HCT116 (cell line): ENCODE measurements at regions of chr2 and their contacts with region 1.

Region 1: DNA sequence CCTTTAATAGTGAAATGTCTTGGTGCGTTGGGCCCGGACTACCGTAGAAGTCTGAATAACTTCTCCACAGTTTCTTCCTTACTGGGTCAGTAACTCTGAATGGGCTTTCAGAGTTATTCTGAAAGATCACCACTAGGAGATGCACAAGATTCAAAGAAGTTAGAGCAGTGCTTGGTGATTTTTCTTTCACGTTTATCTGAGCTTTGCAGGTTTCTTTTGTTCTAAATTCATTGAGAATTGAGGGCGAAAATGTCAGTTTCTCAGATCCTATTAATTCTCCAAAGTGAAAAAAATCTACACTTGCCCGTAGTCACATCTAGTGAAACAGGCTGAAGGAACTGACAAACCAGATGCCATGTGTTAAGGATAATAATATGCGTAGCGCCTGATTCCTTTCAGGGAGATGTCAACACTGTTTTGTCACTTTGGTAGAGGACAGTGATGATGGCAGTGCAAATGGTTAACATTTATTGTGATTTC is 70.1 kb downstream of the QPCT start:
- DNase-seq: peak; percentile 42
- ATAC-seq: peak; percentile 91
- H3K4me3 ChIP-seq: no peak overlapping the region
- H3K27ac ChIP-seq: no peak overlapping the region
- H3K4me1 ChIP-seq: no peaks in the 10 kb centered on the region
- H3K27me3 ChIP-seq: no peaks in the 10 kb centered on the region
- CTCF ChIP-seq: peak; percentile 73 to 93 (median 86)
- POLR2A ChIP-seq: no peak
- RAD21 ChIP-seq: peak; percentile 97

Region 2: GRCh38 chr2:37394263-37394662 is 20.2 kb before region 1 on chr2:
- CTCF ChIA-PET with region 1: interaction called, 23 read pairs
- POLR2A ChIA-PET with region 1: no interaction called
- RAD21 ChIA-PET with region 1: interaction called, 4 to 8 read pairs
- intact Hi-C with region 1: no loop called
- DNase-seq: no peak
- ATAC-seq: no peak
- H3K4me3 ChIP-seq: no peak overlapping the region
- H3K27ac ChIP-seq: no peak overlapping the region
- H3K4me1 ChIP-seq: peaks cover 3 to 18% of the 10 kb centered on the region in 2 experiments; a peak in 3 of 4 replicates
- H3K27me3 ChIP-seq: no peaks in the 10 kb centered on the region
- CTCF ChIP-seq: no peak
- POLR2A ChIP-seq: no peak
- RAD21 ChIP-seq: no peak

Region 3: GRCh38 chr2:37570773-37571586 is 156.5 kb after region 1 on chr2:
- CTCF ChIA-PET with region 1: no interaction called
- POLR2A ChIA-PET with region 1: no interaction called
- RAD21 ChIA-PET with region 1: no interaction called
- intact Hi-C with region 1: loop called (anchors 10 kb)
- DNase-seq: no peak
- ATAC-seq: no peak
- H3K4me3 ChIP-seq: no peak overlapping the region
- H3K27ac ChIP-seq: no peak overlapping the region
- H3K4me1 ChIP-seq: peaks cover 0 to 12% of the 10 kb centered on the region in 2 experiments; a peak in 1 of 4 replicates
- H3K27me3 ChIP-seq: no peaks in the 10 kb centered on the region
- CTCF ChIP-seq: no peak
- POLR2A ChIP-seq: no peak
- RAD21 ChIP-seq: no peak

Region 4: DNA sequence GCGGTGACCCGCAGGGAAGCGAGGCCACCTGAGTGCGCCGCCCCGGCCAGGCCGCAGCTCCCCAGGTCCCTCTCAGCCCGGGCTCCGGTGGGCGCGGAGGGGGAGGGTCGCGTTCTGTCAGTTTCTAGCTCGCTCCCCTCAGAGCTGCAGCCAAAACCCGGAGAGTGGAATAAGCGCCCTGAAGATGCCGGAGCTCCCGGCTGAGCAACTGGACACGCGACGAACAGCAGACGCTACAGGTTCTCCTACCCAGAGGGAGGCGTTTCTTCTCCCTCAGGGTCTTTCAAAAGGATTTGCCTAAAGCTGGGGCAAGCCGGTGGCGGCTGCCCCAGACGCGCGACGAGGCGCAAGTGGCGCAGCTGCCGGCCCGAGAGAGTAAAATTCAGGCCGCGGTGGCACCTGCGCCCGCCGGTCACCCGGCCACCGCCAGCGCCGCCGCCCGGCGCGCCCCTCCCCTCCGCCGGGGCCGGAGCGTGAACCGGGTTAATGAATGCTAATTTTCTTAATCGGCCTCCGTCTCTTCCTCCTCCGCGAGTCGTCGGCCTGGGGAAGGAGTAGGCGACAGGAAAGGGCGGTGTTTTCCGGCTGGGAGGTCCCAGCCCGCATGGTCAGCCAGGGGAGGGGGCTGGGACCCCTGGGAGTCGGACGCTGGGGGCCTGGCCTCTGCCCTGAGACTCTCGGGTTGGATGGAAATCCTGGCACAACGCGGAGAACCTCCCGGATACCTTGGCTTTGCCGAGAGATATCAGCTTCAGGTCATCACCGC is 257.8 kb after region 1 on chr2:
- CTCF ChIA-PET with region 1: no interaction called
- POLR2A ChIA-PET with region 1: interaction called, 3 read pairs
- RAD21 ChIA-PET with region 1: interaction called in 1 of 2 experiments, 7 read pairs
- intact Hi-C with region 1: loop called (anchors 2 kb)
- DNase-seq: peak; percentile 81
- ATAC-seq: peak; percentile 52
- H3K4me3 ChIP-seq: peak overlapping the region; percentile 75 to 91
- H3K27ac ChIP-seq: peak overlapping the region; percentile 93
- H3K4me1 ChIP-seq: peaks cover 20 to 37% of the 10 kb centered on the region in 2 experiments; a peak in 3 of 4 replicates
- H3K27me3 ChIP-seq: no peaks in the 10 kb centered on the region
- CTCF ChIP-seq: no peak; a peak in 1 of 6 replicates
- POLR2A ChIP-seq: no peak
- RAD21 ChIP-seq: no peak; the same call in 1 of the 2 replicates

Region 5: DNA sequence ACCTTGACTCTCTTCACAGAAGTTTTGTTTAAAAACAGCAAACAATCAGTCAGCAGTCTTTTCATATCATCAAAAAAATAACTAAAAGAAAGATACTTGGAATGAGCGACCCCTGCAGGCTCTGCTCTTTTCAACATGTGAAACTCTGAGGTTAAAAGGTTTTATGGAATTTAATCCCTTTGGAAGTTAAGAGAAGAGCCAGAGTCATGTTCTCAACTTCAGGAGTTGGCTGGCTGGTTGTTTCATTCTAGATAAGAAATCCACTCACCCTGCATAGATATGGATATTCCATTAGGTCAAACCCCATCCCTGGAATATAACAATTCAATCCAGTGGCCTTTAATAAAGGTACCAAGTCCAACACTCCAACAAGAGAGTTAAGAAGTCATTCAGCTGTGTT is 395.0 kb after region 1 on chr2:
- CTCF ChIA-PET with region 1: interaction called, 5 read pairs
- POLR2A ChIA-PET with region 1: no interaction called
- RAD21 ChIA-PET with region 1: interaction called in 1 of 2 experiments, 4 read pairs
- intact Hi-C with region 1: loop called (anchors 1 kb)
- DNase-seq: peak; percentile 12
- ATAC-seq: no peak; the same call in 1 of the 2 replicates
- H3K4me3 ChIP-seq: no peak overlapping the region
- H3K27ac ChIP-seq: no peak overlapping the region
- H3K4me1 ChIP-seq: no peaks in the 10 kb centered on the region
- H3K27me3 ChIP-seq: no peaks in the 10 kb centered on the region
- CTCF ChIP-seq: peak; percentile 60 to 74 (median 61); a peak in 5 of 6 replicates
- POLR2A ChIP-seq: no peak
- RAD21 ChIP-seq: peak; percentile 76

Region 6: DNA sequence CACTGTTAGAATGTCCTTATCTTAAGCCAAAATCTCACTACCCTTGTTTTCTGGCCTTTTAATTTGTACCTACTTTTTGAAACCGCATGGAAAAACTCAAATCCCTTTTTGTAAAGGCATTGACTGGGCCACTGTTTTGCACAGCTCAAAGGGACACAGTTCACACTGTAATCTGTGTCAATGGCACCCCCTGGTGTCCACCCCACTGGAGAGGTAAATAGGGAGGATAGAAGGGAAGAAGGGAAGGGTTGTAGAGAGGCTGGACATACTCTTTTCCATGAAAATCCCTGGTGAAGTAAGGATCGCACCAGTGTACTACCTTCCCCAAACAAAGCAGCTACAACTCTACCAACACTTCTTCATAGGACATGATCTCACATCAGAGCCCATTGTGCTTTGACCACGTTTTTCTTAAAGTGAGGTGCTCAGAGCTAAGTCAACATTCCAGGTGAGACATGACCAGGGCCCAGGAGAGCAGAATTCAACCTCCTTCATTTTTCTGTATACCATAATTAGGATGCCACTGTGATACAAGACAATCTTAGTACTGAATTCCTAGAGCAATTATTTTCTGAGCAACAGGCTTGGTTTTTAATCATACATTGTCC is 418.2 kb after region 1 on chr2:
- CTCF ChIA-PET with region 1: interaction called, 186 read pairs
- POLR2A ChIA-PET with region 1: no interaction called
- RAD21 ChIA-PET with region 1: interaction called, 29 to 38 read pairs
- intact Hi-C with region 1: loop called (anchors 1 kb)
- DNase-seq: peak; percentile 71
- ATAC-seq: peak; percentile 99
- H3K4me3 ChIP-seq: no peak overlapping the region
- H3K27ac ChIP-seq: no peak overlapping the region
- H3K4me1 ChIP-seq: peaks cover 4 to 6% of the 10 kb centered on the region in 2 experiments; a peak in 1 of 4 replicates
- H3K27me3 ChIP-seq: no peaks in the 10 kb centered on the region
- CTCF ChIP-seq: peak; percentile 84 to 94 (median 85)
- POLR2A ChIP-seq: no peak
- RAD21 ChIP-seq: peak; percentile 98